ENCODE measurements at regions of chr6 and their contacts with region 1.

Region 1: GRCh38 chr6:148177589-148178233 is 164.9 kb upstream of the SASH1 start:
- DNase-seq: peak in 3 of 5 donors; percentile 5 to 11 (median 9)
- H3K4me3 ChIP-seq: no peak overlapping the region
- H3K4me3 Mint-ChIP-seq: no peak overlapping the region
- H3K27ac ChIP-seq: no peak overlapping the region
- H3K27ac Mint-ChIP-seq: peak overlapping the region in 2 of 7 donors; percentile 10 to 28
- H3K4me1 ChIP-seq: no peaks in the 10 kb centered on the region
- H3K4me1 Mint-ChIP-seq: no peaks in the 10 kb centered on the region
- H3K27me3 ChIP-seq: no peaks in the 10 kb centered on the region
- H3K27me3 Mint-ChIP-seq: peaks cover 5 to 19% of the 10 kb centered on the region in 2 donors

Region 2: DNA sequence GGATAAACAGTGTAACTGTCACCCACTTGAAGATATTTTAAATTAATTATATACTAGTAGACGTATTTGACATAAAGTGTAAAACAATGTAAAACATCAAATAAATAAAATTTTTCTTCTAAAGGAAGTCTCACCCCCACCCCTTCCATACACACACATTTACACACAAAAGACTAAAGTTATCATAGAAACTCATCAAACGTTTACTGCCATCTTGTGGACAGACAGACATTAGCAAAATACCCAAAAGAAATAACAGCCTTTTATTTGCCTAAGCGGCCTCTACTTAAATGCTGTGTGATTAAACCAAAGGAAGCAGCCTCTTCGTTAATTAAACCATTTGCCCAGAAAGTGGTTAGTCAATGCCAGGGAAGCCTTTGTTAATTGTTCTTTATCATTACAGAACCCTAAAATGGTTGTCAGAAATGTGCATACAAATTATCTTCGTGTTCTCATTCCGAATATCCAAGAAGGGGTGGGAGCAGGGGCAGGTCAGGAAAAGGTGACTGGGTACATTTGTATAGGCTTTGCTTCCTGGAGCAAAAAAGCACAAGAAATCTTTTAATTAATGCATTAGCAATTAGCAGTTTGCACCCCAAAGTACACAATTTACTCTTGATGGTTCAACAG is 11.3 kb before region 1 on chr6:
- CTCF ChIA-PET with region 1: interaction called, 17 read pairs
- POLR2A ChIA-PET with region 1: no interaction called
- intact Hi-C with region 1: no loop called
- DNase-seq: peak in 4 of 5 donors; percentile 23 to 30 (median 26)
- H3K4me3 ChIP-seq: no peak overlapping the region
- H3K4me3 Mint-ChIP-seq: no peak overlapping the region
- H3K27ac ChIP-seq: no peak overlapping the region
- H3K27ac Mint-ChIP-seq: no peak overlapping the region
- H3K4me1 ChIP-seq: no peaks in the 10 kb centered on the region
- H3K4me1 Mint-ChIP-seq: no peaks in the 10 kb centered on the region
- H3K27me3 ChIP-seq: no peaks in the 10 kb centered on the region
- H3K27me3 Mint-ChIP-seq: peaks cover 3 to 5% of the 10 kb centered on the region in 2 donors

Region 3: GRCh38 chr6:148223424-148223842 is 45.7 kb after region 1 on chr6:
- CTCF ChIA-PET with region 1: no interaction called
- POLR2A ChIA-PET with region 1: no interaction called
- intact Hi-C with region 1: no loop called
- DNase-seq: no peak
- H3K4me3 ChIP-seq: no peak overlapping the region
- H3K4me3 Mint-ChIP-seq: no peak overlapping the region
- H3K27ac ChIP-seq: no peak overlapping the region
- H3K27ac Mint-ChIP-seq: no peak overlapping the region
- H3K4me1 ChIP-seq: no peaks in the 10 kb centered on the region
- H3K4me1 Mint-ChIP-seq: peaks cover 0 to 8% (median under 1%) of the 10 kb centered on the region in 4 donors
- H3K27me3 ChIP-seq: no peaks in the 10 kb centered on the region
- H3K27me3 Mint-ChIP-seq: peaks cover 20 to 22% of the 10 kb centered on the region in 2 donors

Region 4: GRCh38 chr6:148250975-148251685 is 73.4 kb after region 1 on chr6:
- CTCF ChIA-PET with region 1: interaction called, 15 read pairs
- POLR2A ChIA-PET with region 1: no interaction called
- intact Hi-C with region 1: loop called (anchors 1 kb)
- DNase-seq: peak in 3 of 5 donors; percentile 7 to 18 (median 10)
- H3K4me3 ChIP-seq: no peak overlapping the region
- H3K4me3 Mint-ChIP-seq: no peak overlapping the region
- H3K27ac ChIP-seq: no peak overlapping the region
- H3K27ac Mint-ChIP-seq: no peak overlapping the region
- H3K4me1 ChIP-seq: no peaks in the 10 kb centered on the region
- H3K4me1 Mint-ChIP-seq: no peaks in the 10 kb centered on the region
- H3K27me3 ChIP-seq: no peaks in the 10 kb centered on the region
- H3K27me3 Mint-ChIP-seq: peaks cover 1 to 2% of the 10 kb centered on the region in 2 donors

Region 5: DNA sequence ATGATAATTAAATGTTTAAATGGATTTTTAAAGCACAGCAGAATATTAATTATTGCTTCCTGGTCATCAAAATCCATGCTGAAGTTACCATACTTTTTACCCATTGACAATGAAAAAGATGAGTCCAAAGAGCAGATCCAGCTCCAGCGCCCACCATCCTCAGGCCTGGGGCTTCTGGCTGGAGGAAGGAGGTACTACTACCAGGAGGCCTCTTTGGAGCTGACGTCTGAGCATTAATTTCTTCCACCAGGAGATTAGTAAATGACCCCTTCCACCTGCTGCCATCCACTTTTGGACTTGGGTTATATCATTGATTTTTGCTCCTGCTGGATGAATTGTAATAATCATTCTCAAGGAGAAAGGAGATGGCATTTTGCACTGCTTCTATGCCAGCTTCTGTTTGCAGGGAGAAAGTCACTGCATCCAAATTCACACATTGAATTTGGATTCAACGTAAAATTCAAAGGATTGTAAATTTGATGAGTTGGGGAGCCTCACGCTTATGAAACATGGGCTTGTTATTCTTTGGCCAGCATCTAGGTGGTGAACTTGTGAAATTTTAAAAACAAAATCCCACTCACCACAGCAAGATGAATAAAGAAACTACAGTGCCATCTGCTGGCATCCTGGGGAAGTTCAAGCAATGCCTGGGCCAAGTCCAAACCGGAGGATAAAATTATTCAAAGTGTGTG is 286.8 kb after region 1 on chr6:
- CTCF ChIA-PET with region 1: interaction called, 20 read pairs
- POLR2A ChIA-PET with region 1: no interaction called
- intact Hi-C with region 1: no loop called
- DNase-seq: peak in 4 of 5 donors; percentile 39 to 48 (median 43)
- H3K4me3 ChIP-seq: no peak overlapping the region
- H3K4me3 Mint-ChIP-seq: no peak overlapping the region
- H3K27ac ChIP-seq: no peak overlapping the region
- H3K27ac Mint-ChIP-seq: no peak overlapping the region
- H3K4me1 ChIP-seq: no peaks in the 10 kb centered on the region
- H3K4me1 Mint-ChIP-seq: peaks cover 1 to 11% (median 5%) of the 10 kb centered on the region in 4 donors
- H3K27me3 ChIP-seq: no peaks in the 10 kb centered on the region
- H3K27me3 Mint-ChIP-seq: peaks cover 7 to 17% of the 10 kb centered on the region in 2 donors